Sciatic nerve (tissue), 2 donors: ENCODE measurements at regions of chr17 and their contacts with region 1.

Region 1: GRCh38 chr17:59331129-59331928 is at the start of gene YPEL2:
- DNase-seq: peak; percentile 98
- ATAC-seq: peak; percentile 95
- total RNA-seq, gene YPEL2: 55.1 TPM

Region 2: GRCh38 chr17:59244081-59244480 is 87.2 kb before region 1 on chr17:
- intact Hi-C with region 1: no loop called
- DNase-seq: no peak
- ATAC-seq: no peak

Region 3: GRCh38 chr17:59431601-59432000 is 100.3 kb after region 1 on chr17:
- intact Hi-C with region 1: loop called (anchors 5 kb)
- DNase-seq: no peak
- ATAC-seq: no peak

Region 4: DNA sequence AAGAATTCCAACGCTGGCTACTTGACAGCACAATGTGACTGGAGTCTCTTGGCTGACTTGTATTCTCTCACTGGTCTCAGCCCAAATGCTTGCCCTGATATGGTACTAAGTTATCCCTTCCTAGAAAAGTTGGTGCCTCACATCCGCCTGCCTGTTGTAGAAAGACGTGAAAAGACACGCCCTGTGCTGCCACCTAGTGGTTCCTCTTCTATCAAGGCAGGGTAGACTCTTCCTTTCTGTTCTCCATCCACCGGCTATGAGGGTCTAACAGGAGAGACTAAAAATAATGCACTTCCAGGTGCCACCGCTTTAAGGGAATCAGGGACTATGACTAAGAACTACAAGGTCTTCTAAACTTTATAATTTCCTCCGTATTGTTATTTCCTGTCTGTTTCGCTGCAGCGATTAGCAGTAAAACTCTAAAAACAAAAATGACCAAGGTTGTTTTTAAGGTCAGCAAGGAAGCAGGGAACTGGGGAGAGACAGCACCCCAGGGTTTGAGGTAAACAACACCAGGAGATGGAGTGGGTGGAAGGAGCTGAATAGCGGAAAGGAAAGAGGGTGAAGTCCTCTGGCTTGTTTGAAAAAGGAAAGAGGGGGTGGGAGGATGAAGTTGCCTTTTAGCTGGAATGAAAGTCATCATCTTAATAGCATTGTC is 109.6 kb after region 1 on chr17:
- intact Hi-C with region 1: loop called (anchors 5 kb)
- DNase-seq: peak; percentile 95
- ATAC-seq: peak; percentile 98

Region 5: DNA sequence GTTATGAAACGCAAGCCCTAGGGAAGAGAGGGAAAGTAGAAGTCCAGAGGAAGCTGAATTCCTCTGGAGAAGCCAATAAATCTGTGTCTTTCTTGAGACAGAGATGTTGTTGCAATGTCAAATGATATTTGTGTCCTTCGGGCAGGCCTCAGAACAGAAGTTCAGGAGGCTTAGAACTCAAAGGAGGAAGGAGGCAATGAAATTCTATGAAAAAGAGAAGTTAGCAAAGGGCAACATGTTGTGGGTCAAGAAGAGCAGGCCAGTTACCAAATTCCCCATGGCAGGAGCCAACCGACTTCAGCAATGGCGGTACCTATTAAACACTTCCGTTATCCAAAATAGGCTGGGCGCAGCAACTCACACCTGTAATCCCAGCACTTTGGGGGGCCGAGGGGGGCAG is 125.1 kb after region 1 on chr17:
- intact Hi-C with region 1: no loop called
- DNase-seq: no peak
- ATAC-seq: no peak